ENCODE measurements at regions of chr1 and their contacts with region 1.

Region 1: DNA sequence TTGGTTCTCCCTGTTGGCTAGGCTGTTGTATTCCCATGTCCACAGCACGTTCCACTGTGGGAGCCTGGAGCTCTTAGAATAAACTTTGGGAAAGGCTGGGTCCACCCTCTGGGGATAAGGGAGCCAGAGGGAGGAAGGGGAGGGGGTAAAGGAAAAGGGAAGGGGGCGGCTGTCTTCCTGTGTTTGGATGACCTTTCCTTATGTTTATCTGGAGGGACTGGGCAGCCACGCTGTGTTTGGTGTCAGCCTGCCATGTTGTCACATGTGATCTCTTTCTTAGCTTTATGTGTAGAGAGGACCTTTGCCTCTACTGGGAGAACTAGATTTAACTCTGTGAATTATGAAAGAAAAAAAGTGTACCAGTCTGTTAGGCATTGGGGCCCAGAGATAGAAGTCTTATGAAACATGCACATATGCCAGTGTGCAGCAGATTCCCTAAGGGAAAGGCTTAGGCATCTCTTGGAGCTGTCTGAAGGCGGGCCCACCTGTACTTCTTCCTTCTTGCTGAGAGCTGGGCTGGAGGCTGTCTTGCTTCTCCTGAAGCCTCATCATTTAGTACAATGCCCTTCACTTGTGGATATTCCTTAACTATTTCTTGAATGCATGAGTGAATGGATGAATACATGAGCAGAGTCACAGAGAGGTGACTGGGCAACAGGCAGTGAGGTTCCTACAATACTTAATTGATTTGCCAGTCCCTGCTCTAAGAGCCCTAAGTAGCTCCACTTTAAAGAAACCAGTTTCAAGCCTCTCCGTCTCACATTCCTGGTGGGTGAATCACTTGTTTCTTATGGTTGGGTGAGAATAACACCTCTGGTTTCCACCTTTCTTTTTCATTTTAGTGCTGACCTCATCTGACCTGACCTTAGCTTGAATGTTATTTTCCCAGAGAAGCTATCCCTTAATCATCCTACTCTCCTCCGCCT is 62.5 kb upstream of the ARHGAP29 start:
- DNase-seq: peak; percentile 98
- ATAC-seq: peak; percentile 87
- H3K4me3 ChIP-seq: peak overlapping the region in 1 of 2 experiments; percentile 21; a peak in 2 of 4 replicates
- H3K27ac ChIP-seq: peak overlapping the region; percentile 94
- H3K4me1 ChIP-seq: peaks cover 40 to 93% of the 10 kb centered on the region in 2 experiments
- H3K27me3 ChIP-seq: no peaks in the 10 kb centered on the region
- CTCF ChIP-seq: no peak
- POLR2A ChIP-seq: no peak
- RAD21 ChIP-seq: peak; percentile 49

Region 2: DNA sequence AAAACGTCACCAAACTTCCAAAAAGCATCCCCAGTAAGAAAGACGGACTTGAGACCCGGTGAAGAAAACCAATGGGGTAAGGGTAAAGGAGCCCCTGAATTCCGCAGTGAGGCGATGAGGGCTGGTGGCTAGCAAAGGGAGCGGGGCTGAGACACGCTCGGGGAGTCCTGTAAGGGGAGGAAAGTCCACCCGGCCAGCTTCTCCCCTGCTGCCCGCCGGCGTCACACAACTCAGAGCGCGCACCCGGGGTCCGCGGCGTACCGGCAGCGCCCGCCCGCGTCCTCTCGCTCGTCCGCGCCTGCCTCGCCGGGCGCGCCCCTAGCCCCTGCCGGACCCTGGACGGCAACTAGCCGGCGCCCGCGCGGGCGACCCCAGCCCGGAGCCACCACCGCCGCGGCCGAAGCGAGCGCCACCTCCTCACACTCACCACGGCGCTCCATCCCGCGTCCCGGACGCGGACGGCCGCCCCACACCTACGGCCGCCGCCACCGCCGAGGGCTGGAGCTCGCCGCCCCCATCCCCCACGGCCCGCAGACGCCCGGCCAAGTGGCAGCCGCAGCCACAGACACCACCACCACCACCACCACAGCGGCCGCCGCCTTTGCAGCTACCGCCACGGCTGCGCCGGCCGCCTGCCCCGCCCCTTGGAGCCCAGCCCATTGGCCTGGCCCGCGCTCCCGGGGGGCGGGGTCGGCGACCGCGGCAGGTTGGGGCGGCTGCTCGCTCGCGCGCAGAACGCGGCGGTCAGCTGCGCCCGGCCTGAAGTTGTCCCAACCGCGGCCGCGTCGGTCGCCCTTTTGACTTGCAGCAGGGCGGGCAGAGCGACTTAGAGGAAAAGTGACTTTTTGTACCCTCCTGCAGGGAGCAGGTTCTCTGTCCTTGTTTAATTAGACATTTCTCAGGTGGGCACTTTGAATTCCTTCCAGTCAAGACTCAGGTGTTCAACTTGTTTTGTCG is 52.5 kb before region 1 on chr1:
- CTCF ChIA-PET with region 1: no interaction called
- POLR2A ChIA-PET with region 1: interaction called, 37 read pairs
- RAD21 ChIA-PET with region 1: interaction called in 1 of 2 experiments, 3 read pairs
- intact Hi-C with region 1: loop called (anchors 2 kb)
- DNase-seq: peak; percentile 67
- ATAC-seq: peak; percentile 81
- H3K4me3 ChIP-seq: peak overlapping the region; percentile 83
- H3K27ac ChIP-seq: peak overlapping the region; percentile 92
- H3K4me1 ChIP-seq: peaks cover 47 to 80% of the 10 kb centered on the region in 2 experiments
- H3K27me3 ChIP-seq: no peaks in the 10 kb centered on the region
- CTCF ChIP-seq: no peak
- POLR2A ChIP-seq: peak; percentile 80
- RAD21 ChIP-seq: peak; percentile 10; the same call in 1 of the 2 replicates

Region 3: GRCh38 chr1:94284476-94284875 is 15.4 kb before region 1 on chr1:
- CTCF ChIA-PET with region 1: no interaction called
- POLR2A ChIA-PET with region 1: interaction called, 42 read pairs
- RAD21 ChIA-PET with region 1: interaction called in 1 of 2 experiments, 5 read pairs
- intact Hi-C with region 1: no loop called
- DNase-seq: no peak
- ATAC-seq: no peak
- H3K4me3 ChIP-seq: no peak overlapping the region
- H3K27ac ChIP-seq: peak overlapping the region; percentile 69; the same call in 1 of the 2 replicates
- H3K4me1 ChIP-seq: peaks cover 58 to 78% of the 10 kb centered on the region in 2 experiments
- H3K27me3 ChIP-seq: no peaks in the 10 kb centered on the region
- CTCF ChIP-seq: no peak
- POLR2A ChIP-seq: no peak
- RAD21 ChIP-seq: no peak

Region 4: GRCh38 chr1:94310570-94311270 is 10.8 kb after region 1 on chr1:
- CTCF ChIA-PET with region 1: no interaction called
- POLR2A ChIA-PET with region 1: interaction called, 20 read pairs
- RAD21 ChIA-PET with region 1: no interaction called
- intact Hi-C with region 1: no loop called
- DNase-seq: no peak
- ATAC-seq: peak; percentile 75
- H3K4me3 ChIP-seq: peak overlapping the region in 1 of 2 experiments; percentile 8; a peak in 1 of 4 replicates
- H3K27ac ChIP-seq: peak overlapping the region; percentile 87
- H3K4me1 ChIP-seq: peaks cover 61 to 86% of the 10 kb centered on the region in 2 experiments
- H3K27me3 ChIP-seq: no peaks in the 10 kb centered on the region
- CTCF ChIP-seq: no peak
- POLR2A ChIP-seq: no peak
- RAD21 ChIP-seq: peak; percentile 23; the same call in 1 of the 2 replicates

Region 5: GRCh38 chr1:94316836-94317789 is 17.2 kb after region 1 on chr1:
- CTCF ChIA-PET with region 1: no interaction called
- POLR2A ChIA-PET with region 1: interaction called, 27 read pairs
- RAD21 ChIA-PET with region 1: no interaction called
- intact Hi-C with region 1: no loop called
- DNase-seq: no peak
- ATAC-seq: peak; percentile 70
- H3K4me3 ChIP-seq: no peak overlapping the region
- H3K27ac ChIP-seq: peak overlapping the region; percentile 63
- H3K4me1 ChIP-seq: peaks cover 75 to 88% of the 10 kb centered on the region in 2 experiments
- H3K27me3 ChIP-seq: no peaks in the 10 kb centered on the region
- CTCF ChIP-seq: no peak
- POLR2A ChIP-seq: no peak
- RAD21 ChIP-seq: no peak

Region 6: GRCh38 chr1:94329986-94330385 is 30.1 kb after region 1 on chr1:
- CTCF ChIA-PET with region 1: interaction called, 5 read pairs
- POLR2A ChIA-PET with region 1: interaction called, 37 read pairs
- RAD21 ChIA-PET with region 1: interaction called, 3 to 7 read pairs
- intact Hi-C with region 1: no loop called
- DNase-seq: no peak
- ATAC-seq: peak; percentile 21
- H3K4me3 ChIP-seq: peak overlapping the region in 1 of 2 experiments; percentile 5; a peak in 1 of 4 replicates
- H3K27ac ChIP-seq: peak overlapping the region; percentile 90
- H3K4me1 ChIP-seq: peaks cover 65 to 89% of the 10 kb centered on the region in 2 experiments
- H3K27me3 ChIP-seq: no peaks in the 10 kb centered on the region
- CTCF ChIP-seq: peak; percentile 58 to 87 (median 63)
- POLR2A ChIP-seq: no peak
- RAD21 ChIP-seq: peak; percentile 97

Measured in HCT116 (cell line).